Sciatic nerve (tissue), 2 donors: ENCODE measurements at regions of chr10 and their contacts with region 1.

Region 1: GRCh38 chr10:68781613-68782574 is 45.4 kb upstream of the STOX1 start:
- DNase-seq: no peak
- ATAC-seq: no peak

Region 2: GRCh38 chr10:68752711-68753350 is 29.1 kb before region 1 on chr10:
- intact Hi-C with region 1: loop called (anchors 1 kb)
- DNase-seq: no peak
- ATAC-seq: no peak